ENCODE measurements at regions of chr14 and their contacts with region 1.

Region 1: GRCh38 chr14:91286530-91286937 is 42.0 kb upstream of the GPR68 start:
- DNase-seq: peak; percentile 55 to 78 (median 74)
- H3K4me3 ChIP-seq: no peak overlapping the region
- H3K27ac ChIP-seq: no peak overlapping the region
- H3K4me1 ChIP-seq: no peaks in the 10 kb centered on the region
- H3K27me3 ChIP-seq: no peaks in the 10 kb centered on the region
- CTCF ChIP-seq: peak; percentile 68 to 80 (median 72)
- EP300 ChIP-seq: no peak
- POLR2A ChIP-seq: no peak

Region 2: DNA sequence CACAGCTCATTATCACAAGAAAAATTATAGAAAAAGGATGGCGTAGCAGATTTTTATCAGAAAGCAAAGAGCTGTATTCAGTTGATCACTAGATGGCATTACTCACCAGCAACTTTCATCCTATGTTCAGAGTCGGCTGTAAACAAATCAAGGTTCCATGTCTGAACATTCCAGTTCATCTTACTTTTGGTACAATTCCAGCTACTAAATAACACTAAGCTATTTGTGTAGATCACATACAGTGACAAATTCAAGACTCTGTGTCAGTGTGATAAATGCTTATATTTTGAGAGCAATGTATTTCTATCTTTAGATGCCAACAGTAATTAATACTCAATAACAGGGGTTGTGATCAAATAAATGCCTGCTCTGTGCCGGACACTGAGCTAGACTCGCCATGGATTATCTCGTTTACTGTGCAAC is 984.9 kb before region 1 on chr14:
- intact Hi-C with region 1: loop called in 1 of 4 experiments (anchors 10 kb)
- DNase-seq: no peak
- H3K4me3 ChIP-seq: no peak overlapping the region
- H3K27ac ChIP-seq: peak overlapping the region in 1 of 2 donors; percentile 30
- H3K4me1 ChIP-seq: peaks cover 7% of the 10 kb centered on the region
- H3K27me3 ChIP-seq: no peaks in the 10 kb centered on the region
- CTCF ChIP-seq: peak in 2 of 3 donors; percentile 32 to 35
- EP300 ChIP-seq: no peak
- POLR2A ChIP-seq: no peak

Region 3: DNA sequence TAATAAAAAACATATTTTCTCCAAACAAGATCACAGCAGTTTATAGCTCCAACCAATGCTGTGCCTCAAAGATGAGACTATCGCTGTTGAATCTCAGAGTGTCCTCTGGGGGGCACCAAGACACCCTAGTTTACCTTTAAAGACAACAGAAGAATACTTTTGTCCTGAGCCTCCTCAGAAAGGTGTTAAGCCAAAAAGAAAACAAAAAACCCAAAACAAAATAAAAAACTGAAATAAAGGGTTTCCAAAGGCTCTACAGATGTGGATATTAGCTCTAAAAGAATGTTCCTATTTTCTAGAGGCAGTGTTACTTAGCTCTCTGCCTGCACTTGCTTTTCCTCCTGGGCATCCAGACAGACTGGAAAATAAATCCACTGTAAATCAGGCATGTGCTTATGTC is 383.4 kb before region 1 on chr14:
- intact Hi-C with region 1: loop called in 3 of 4 experiments (anchors 10 kb)
- DNase-seq: peak; percentile 38 to 71 (median 48)
- H3K4me3 ChIP-seq: no peak overlapping the region
- H3K27ac ChIP-seq: no peak overlapping the region
- H3K4me1 ChIP-seq: no peaks in the 10 kb centered on the region
- H3K27me3 ChIP-seq: no peaks in the 10 kb centered on the region
- CTCF ChIP-seq: peak in 2 of 3 donors; percentile 56 to 77
- EP300 ChIP-seq: no peak
- POLR2A ChIP-seq: no peak

Region 4: GRCh38 chr14:91177073-91178034 is 109.2 kb before region 1 on chr14:
- intact Hi-C with region 1: loop called in 3 of 4 experiments (anchors 5 to 10 kb)
- DNase-seq: peak in 1 of 5 donors; percentile 40
- H3K4me3 ChIP-seq: no peak overlapping the region
- H3K27ac ChIP-seq: no peak overlapping the region
- H3K4me1 ChIP-seq: no peaks in the 10 kb centered on the region
- H3K27me3 ChIP-seq: no peaks in the 10 kb centered on the region
- CTCF ChIP-seq: peak in 2 of 3 donors; percentile 29 to 39
- EP300 ChIP-seq: no peak
- POLR2A ChIP-seq: no peak

Region 5: DNA sequence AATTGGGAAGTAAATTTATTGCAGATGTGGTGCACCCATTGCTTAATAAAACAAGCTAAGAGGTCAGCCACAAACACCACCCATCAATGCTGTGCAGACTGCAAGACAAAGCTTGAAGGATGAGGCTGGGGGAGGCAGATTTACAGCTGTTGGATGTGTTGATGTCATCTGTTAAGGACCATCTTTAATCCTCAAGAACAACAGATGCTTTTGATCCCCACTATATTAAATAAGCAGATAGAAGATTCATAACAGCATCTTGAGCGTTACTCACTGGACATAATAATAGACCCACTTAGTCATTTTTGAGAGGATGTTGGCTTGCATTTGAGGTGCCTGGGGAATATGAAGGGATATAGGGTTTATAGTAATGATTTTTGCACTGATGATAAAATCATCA is 100.8 kb before region 1 on chr14:
- intact Hi-C with region 1: loop called in 3 of 4 experiments (anchors 5 to 10 kb)
- DNase-seq: no peak
- H3K4me3 ChIP-seq: no peak overlapping the region
- H3K27ac ChIP-seq: no peak overlapping the region
- H3K4me1 ChIP-seq: no peaks in the 10 kb centered on the region
- H3K27me3 ChIP-seq: no peaks in the 10 kb centered on the region
- CTCF ChIP-seq: no peak
- EP300 ChIP-seq: no peak
- POLR2A ChIP-seq: no peak

Region 6: GRCh38 chr14:91193069-91193468 is 93.5 kb before region 1 on chr14:
- intact Hi-C with region 1: loop called in 2 of 4 experiments (anchors 5 to 10 kb)
- DNase-seq: no peak
- H3K4me3 ChIP-seq: no peak overlapping the region
- H3K27ac ChIP-seq: no peak overlapping the region
- H3K4me1 ChIP-seq: no peaks in the 10 kb centered on the region
- H3K27me3 ChIP-seq: no peaks in the 10 kb centered on the region
- CTCF ChIP-seq: no peak
- EP300 ChIP-seq: no peak
- POLR2A ChIP-seq: no peak

Region 7: DNA sequence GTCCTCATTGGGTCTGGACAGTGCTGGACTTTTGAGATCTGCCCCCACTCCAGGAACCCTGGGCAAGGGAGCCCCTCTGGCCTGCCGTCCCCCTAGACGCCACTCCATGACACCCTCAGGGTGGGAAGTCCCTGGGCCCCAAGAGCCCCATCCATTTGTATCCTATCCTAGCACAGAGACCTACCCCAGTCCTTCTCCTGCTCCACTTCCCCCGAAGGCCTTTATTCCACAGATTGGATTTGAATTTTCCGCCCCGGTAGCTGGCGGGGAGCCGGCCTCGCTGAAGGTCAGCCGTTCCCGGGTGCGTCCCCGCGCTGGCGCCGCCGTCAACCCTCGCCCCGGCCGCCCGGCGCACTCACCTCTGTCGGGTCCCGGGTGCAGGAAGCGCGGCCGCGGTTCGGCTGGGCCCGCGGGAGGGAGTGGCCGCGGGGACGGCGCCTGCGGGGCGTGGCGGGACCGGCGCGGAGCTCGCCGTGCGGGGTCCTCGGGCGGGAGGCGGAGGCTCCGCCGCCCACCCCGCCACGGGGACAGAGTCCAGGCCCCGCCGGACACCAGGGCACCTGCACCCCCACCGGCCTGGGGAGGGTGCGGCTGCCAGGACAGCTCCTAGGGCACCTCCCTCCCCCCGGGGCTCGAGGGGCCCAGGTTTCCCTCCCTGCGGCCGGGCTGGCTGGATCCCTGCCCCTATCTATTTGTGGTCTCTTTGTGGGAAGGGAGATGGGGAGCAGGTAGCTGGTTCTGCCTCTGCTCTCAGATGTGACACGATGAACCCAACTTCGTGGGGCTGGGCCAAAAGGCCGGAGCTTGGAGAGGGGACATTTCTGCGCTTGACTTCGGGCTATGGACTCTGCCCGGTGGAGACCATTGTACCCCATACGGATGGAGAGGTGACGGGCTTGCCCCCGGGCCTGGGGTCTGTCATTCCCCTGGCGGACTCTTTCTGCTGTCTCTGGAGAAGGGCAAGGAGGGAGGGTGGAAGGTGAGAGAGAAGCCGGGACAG is 22.1 kb before region 1 on chr14:
- intact Hi-C with region 1: loop called in 1 of 4 experiments (anchors 2 kb)
- DNase-seq: peak in 1 of 5 donors; percentile 55
- H3K4me3 ChIP-seq: peak overlapping the region; percentile 30
- H3K27ac ChIP-seq: no peak overlapping the region
- H3K4me1 ChIP-seq: peaks cover 2% of the 10 kb centered on the region
- H3K27me3 ChIP-seq: no peaks in the 10 kb centered on the region
- CTCF ChIP-seq: no peak
- EP300 ChIP-seq: no peak
- POLR2A ChIP-seq: no peak

Region 8: GRCh38 chr14:91418387-91419043 is 132.0 kb after region 1 on chr14:
- intact Hi-C with region 1: no loop called
- DNase-seq: peak; percentile 29 to 73 (median 56)
- H3K4me3 ChIP-seq: peak overlapping the region; percentile 44
- H3K27ac ChIP-seq: no peak overlapping the region
- H3K4me1 ChIP-seq: peaks cover 5% of the 10 kb centered on the region
- H3K27me3 ChIP-seq: no peaks in the 10 kb centered on the region
- CTCF ChIP-seq: peak; percentile 42 to 85 (median 84)
- EP300 ChIP-seq: no peak
- POLR2A ChIP-seq: no peak

Measured in ovary (tissue), 10 donors.